ENCODE measurements at regions of chr18 and their contacts with region 1.

Region 1: DNA sequence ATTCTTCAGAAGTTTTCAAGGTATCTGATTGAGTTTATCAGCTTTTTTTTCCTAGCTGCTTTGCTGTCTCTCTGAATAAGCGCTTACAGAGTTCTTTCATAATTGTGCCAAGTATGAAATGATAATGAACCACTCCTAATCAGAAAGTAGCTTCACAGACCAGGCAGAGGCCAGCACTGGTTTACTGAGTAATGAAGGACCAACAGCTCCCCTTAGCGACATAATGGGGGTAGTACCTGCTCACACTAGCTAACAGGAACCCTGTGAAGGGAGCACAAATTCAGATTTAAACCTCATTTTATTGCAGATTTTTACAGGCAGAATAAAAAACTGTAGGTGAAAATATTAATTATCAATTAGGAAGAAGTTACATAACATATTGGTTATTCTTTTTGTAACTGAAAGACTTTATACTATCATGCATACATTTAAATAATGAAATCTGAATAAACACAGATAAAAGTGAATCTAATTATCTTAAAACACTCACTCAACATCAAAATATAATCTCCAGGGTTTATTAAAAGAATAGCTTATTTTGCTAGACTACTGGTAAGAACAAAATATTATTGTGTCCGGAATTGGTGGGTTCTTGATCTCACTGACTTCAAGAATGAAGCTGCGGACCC is 53.7 kb upstream of the LRRC30 start:
- DNase-seq: peak; percentile 91
- H3K4me3 ChIP-seq: no peak overlapping the region
- H3K27ac ChIP-seq: no peak overlapping the region
- H3K4me1 ChIP-seq: no peaks in the 10 kb centered on the region
- H3K27me3 ChIP-seq: no peaks in the 10 kb centered on the region
- CTCF ChIP-seq: peak; percentile 55 to 71 (median 59)
- POLR2A ChIP-seq: no peak

Region 2: DNA sequence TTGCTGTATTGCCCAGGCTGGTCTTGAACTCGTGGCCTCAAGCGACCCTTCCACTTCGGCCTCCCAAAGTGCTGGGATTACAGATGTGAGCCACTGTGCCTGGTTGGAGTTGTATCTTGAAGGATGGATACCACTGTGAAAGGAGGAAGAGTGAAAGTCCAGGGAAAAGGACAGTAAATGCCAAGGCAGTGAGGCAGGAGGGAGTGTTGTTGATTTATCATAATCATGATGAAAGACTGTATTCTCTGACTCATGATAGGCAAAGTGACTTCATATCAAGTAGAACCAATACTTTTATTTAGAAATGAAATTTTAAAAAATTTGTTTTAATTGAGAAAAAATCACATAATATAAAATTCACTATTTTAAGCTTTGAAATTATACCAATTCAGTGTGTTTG is 285.4 kb before region 1 on chr18:
- intact Hi-C with region 1: no loop called
- DNase-seq: no peak
- H3K4me3 ChIP-seq: no peak overlapping the region
- H3K27ac ChIP-seq: no peak overlapping the region
- H3K4me1 ChIP-seq: no peaks in the 10 kb centered on the region
- H3K27me3 ChIP-seq: no peaks in the 10 kb centered on the region
- CTCF ChIP-seq: no peak
- POLR2A ChIP-seq: no peak

Region 3: GRCh38 chr18:7038330-7038851 is 138.8 kb before region 1 on chr18:
- intact Hi-C with region 1: loop called (anchors 5 kb)
- DNase-seq: peak; percentile 92
- H3K4me3 ChIP-seq: peak overlapping the region; percentile 25 to 34
- H3K27ac ChIP-seq: peak overlapping the region; percentile 35 to 56
- H3K4me1 ChIP-seq: peaks cover 10% of the 10 kb centered on the region
- H3K27me3 ChIP-seq: no peaks in the 10 kb centered on the region
- CTCF ChIP-seq: peak; percentile 71 to 91 (median 89)
- POLR2A ChIP-seq: no peak

Measured in testis (tissue), 5 donors.